ENCODE measurements at regions of chr6 and their contacts with region 1.

Region 1: DNA sequence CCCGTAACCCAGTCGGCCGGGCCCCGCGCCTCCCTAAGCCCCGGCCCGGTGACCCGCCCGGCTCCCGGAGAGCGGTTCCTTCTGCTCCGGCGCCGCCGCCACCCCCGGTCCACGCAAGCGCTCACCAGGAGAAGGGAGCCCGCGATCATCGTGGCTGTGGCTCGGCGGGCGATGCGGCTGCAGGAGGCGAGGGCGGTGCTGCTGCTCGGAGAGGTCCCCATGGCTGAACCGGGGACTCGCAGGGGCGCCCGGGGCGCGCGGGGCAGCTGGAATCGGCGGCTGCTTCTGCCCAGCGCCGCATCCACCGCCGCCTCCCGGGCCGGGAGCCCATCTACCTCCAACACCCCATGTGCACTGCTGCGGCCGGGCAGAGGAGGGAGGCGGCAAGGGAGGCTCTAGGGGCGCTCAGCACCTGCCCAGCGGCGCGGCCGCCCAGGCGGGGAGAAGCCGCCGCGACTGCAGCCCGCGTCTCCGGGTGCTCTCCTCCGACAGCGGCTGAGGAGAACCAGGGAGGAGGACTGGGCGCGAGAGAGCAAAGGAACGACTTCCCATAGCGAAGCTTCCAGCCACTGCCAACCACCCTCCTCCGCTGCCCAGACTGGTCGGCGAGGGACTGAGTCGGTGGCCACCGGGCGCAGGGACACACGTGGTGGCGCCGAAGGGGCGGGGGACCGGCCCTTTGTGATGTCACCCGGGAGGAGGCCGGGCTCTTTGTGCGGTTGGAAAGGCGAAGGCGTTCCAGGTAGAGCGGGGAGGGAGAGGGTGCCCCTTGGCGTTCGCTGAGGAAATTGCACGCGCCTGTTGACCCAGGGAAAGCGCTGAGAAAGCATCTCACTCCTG is at the start of gene TNFRSF21:
- DNase-seq: peak; percentile 92
- ATAC-seq: peak; percentile 98
- total RNA-seq, gene TNFRSF21: 12.1 to 24.4 TPM

Region 2: GRCh38 chr6:46720401-46720800 is 589.1 kb before region 1 on chr6:
- intact Hi-C with region 1: no loop called
- DNase-seq: no peak
- ATAC-seq: no peak

Region 3: GRCh38 chr6:47097092-47097945 is 212.2 kb before region 1 on chr6:
- intact Hi-C with region 1: loop called (anchors 1 to 5 kb)
- DNase-seq: peak; percentile 53
- ATAC-seq: peak; percentile 85 to 90

Region 4: GRCh38 chr6:47252633-47253032 is 56.9 kb before region 1 on chr6:
- intact Hi-C with region 1: loop called in 1 of 2 experiments (anchors 5 kb)
- DNase-seq: no peak
- ATAC-seq: no peak

Region 5: DNA sequence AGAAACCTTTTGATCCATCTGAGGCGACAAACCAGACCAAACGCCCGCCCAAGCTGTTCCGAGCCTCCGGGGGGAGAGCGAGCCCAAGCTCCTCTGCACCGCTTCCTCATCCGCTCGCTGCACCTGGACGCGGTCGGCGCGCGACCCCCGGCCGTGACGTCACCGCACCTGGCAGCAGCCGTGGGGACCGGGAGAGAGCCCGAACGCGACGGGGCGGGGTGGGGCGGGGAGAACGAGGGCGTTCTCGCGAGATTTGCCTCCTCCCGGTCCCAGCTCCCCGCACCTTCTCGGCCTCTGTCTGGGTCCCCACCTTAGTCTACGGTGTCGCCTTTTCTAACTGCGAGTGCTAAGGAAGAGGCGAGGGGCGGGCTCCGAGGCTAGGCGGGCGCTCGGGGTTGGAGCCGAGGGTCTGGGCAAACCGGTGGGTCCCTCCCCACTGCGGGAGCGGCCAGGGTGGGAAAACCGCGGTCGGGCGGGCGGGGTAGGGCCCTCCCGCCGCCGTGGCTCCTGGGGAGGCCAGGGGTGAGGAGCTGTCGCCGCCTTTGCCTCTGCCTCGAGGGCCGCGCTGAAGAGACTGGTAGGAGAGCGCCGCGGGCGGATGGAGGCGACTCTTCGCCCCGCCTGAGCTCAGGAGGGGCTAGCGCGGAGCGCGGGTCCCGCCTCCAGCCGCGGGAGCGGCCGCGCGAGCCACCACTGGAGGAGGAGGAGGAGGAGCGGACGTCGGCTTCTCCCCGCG is 168.2 kb after region 1 on chr6 and contains the start of gene CD2AP:
- intact Hi-C with region 1: no loop called
- DNase-seq: peak; percentile 89
- ATAC-seq: peak; percentile 94 to 97
- total RNA-seq, gene CD2AP: 12.5 to 16.7 TPM